Left cardiac atrium (tissue), 4 donors: ENCODE measurements at regions of chr3 and their contacts with region 1.

Region 1: DNA sequence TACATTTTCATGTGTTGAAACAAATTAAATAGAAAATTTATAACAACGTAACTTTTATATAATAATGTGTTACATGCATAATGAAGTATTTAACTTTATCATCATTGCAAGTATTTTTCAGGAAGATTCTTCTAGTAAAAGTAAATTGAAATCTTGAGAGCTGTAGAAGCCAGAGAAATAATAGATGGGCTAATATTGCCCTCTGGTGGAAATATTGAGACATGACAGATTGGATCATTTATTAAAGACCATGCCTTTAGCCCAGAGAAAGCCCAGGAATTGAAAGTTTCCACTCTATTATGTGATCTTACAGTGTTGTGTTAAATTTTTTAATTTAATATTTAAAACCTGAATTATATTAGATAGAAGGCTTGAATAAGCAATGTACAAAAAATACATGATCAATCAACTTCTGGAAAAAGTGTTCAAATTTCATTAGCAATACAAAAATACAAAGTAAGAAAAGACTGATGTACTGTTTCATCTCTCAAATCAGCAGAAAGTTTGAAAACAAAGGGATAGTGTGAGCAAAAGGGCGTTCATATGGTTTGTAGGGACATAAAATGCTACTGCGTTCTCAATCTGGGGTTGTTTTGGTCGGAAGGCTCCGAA is 52.7 kb upstream of the SPTSSB start:
- DNase-seq: no peak
- ATAC-seq: peak in 1 of 2 donors; percentile 60

Region 2: DNA sequence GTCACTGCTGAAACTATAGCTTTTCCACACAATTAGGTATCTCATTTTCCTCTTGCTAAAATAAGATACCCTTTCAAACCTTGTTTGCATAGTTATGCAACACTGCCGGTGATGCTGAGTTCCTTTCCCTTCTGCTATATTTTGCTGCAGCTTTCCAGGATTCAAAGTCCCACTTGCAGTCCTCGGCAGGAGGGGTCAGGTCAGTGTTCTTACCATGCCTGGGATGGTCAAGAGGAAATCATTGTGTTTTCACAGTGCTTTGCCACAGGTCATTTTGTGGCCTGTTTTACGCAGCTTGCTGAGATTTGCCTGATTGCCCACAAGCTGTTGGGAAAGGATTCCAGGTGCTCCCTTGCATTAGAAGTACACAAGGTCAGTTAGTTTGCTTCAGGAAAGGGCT is 475.7 kb before region 1 on chr3:
- intact Hi-C with region 1: loop called in 1 of 2 experiments (anchors 5 kb)
- DNase-seq: no peak
- ATAC-seq: no peak

Region 3: DNA sequence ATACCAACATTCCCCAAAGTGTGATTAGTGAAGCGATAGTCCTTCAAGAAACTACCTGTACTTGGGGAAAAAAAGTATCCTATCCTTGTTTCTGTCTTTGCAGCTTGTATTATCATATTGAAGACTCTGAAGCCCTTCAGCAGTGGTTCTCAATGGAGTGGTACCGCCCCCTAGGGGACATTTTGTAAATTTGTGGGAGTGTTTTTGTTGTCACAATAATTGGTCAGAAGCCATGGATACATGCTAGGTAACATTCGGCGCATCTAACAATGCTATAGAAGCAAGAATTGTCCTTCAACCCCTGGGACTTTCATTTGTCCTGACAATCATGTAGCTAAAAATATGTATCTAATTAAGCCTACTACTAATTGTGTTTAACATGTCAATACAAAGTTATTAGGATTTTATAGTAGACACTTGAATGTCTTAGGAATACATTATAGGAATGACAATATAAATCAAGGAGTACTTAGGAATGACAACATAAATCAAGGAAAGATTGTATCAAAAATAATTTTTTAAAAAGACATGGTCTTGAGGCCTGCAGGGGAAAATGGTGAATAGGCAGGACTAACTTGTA is 149.2 kb before region 1 on chr3:
- intact Hi-C with region 1: loop called (anchors 5 kb)
- DNase-seq: no peak
- ATAC-seq: peak in 1 of 2 donors; percentile 31